Ovary (tissue), 10 donors: ENCODE measurements at regions of chr2 and their contacts with region 1.

Region 1: GRCh38 chr2:217289877-217290279 is 430.0 kb upstream of the TNP1 start:
- DNase-seq: no peak
- H3K4me3 ChIP-seq: no peak overlapping the region
- H3K27ac ChIP-seq: no peak overlapping the region
- H3K4me1 ChIP-seq: peaks cover 12% of the 10 kb centered on the region
- H3K27me3 ChIP-seq: no peaks in the 10 kb centered on the region
- CTCF ChIP-seq: no peak
- EP300 ChIP-seq: no peak
- POLR2A ChIP-seq: no peak

Region 2: GRCh38 chr2:217816396-217816869 is 526.6 kb after region 1 on chr2:
- intact Hi-C with region 1: loop called in 1 of 4 experiments (anchors 5 kb)
- DNase-seq: peak in 4 of 5 donors; percentile 52 to 66 (median 60)
- H3K4me3 ChIP-seq: no peak overlapping the region
- H3K27ac ChIP-seq: peak overlapping the region in 1 of 2 donors; percentile 14
- H3K4me1 ChIP-seq: peaks cover 18% of the 10 kb centered on the region
- H3K27me3 ChIP-seq: no peaks in the 10 kb centered on the region
- CTCF ChIP-seq: no peak
- EP300 ChIP-seq: no peak
- POLR2A ChIP-seq: no peak